ENCODE measurements at regions of chr9 and their contacts with region 1.

Region 1: GRCh38 chr9:75588809-75589208 is 301.7 kb upstream of the PCSK5 start:
- DNase-seq: no peak
- H3K4me3 ChIP-seq: no peak overlapping the region
- H3K27ac ChIP-seq: no peak overlapping the region
- H3K4me1 ChIP-seq: no peaks in the 10 kb centered on the region
- H3K27me3 ChIP-seq: no peaks in the 10 kb centered on the region
- CTCF ChIP-seq: no peak
- EP300 ChIP-seq: no peak
- POLR2A ChIP-seq: no peak
- RAD21 ChIP-seq: no peak

Region 2: GRCh38 chr9:75601279-75601678 is 12.5 kb after region 1 on chr9:
- CTCF ChIA-PET with region 1: interaction called, 19 read pairs
- POLR2A ChIA-PET with region 1: no interaction called
- DNase-seq: no peak
- H3K4me3 ChIP-seq: no peak overlapping the region
- H3K27ac ChIP-seq: no peak overlapping the region
- H3K4me1 ChIP-seq: no peaks in the 10 kb centered on the region
- H3K27me3 ChIP-seq: no peaks in the 10 kb centered on the region
- CTCF ChIP-seq: peak in 1 of 3 experiments; percentile 18; a peak in 2 of 4 replicates
- EP300 ChIP-seq: no peak
- POLR2A ChIP-seq: no peak
- RAD21 ChIP-seq: peak; percentile 30 to 38

Region 3: DNA sequence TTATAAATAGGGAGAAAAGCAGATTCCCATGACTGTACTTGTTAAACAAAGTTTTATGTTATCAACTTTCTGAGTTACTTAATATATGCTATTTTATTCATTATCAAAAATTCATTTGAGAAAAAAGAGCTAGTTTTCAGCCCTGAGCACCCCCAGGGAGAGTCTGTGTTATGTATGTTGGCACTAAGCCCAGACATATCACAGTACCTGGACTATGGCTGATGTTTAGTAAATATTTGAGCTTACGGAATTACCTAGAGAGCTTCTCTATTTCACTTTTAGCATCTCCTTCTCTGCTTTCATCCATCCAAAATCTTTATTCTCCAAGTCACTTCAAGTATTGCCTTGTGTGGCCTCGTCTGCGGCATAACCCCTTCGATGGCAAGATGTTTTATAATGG is 75.8 kb after region 1 on chr9:
- CTCF ChIA-PET with region 1: no interaction called
- POLR2A ChIA-PET with region 1: no interaction called
- DNase-seq: no peak
- H3K4me3 ChIP-seq: no peak overlapping the region
- H3K27ac ChIP-seq: no peak overlapping the region
- H3K4me1 ChIP-seq: no peaks in the 10 kb centered on the region
- H3K27me3 ChIP-seq: no peaks in the 10 kb centered on the region
- CTCF ChIP-seq: no peak
- EP300 ChIP-seq: no peak
- POLR2A ChIP-seq: no peak
- RAD21 ChIP-seq: no peak

Measured in H1 (cell line).